Activated T-helper 1 cell treated with anti-CD3 and anti-CD28 coated beads, Interleukin-12 subunit alpha, Interleukin-12 subunit beta, Interleukin-2, Interleukin-4 antibody, amounts not matched to agents 30 ng/mL and 10 ng/mL and 1 ng/mL, durations not matched to agents 14 hours and 24 hours and 36 hours (primary cell): ENCODE measurements at regions of chrX and their contacts with region 1.

Region 1: DNA sequence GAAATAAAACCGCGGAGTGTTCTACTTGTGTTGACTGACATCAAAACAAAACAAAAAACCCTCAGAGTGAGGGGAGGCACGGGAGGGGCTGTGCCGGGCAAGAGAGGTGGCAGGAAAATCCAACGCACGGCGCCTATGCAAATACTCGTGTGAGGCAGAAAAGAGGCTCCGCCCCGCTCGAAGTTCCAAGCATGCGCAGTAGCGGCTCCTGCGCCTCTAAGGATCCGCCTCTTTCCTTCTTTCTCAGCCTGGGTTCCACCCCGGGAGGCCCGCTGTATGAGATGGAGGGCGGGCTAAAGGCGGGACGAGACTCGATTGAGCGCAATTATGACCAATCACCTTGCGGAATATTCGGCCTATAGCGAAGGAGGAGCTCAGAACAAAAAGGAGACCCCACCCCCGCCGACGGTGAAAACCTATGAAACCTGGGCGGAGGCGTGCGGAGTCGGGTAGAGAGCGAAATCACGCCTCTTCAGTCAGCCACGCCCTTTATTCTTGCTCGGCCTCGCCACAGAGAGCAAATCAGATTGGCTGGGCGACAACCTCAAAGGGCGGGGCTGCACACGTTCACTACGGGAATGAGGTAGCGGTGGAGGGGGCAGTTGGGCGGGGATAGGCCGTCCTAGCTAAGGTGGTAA is 720 bp upstream of the CDK16 start:
- DNase-seq: peak; percentile 92
- H3K4me3 Mint-ChIP-seq: peak overlapping the region; percentile 90
- H3K27ac Mint-ChIP-seq: peak overlapping the region; percentile 97
- H3K4me1 Mint-ChIP-seq: peaks cover 41% of the 10 kb centered on the region
- H3K27me3 Mint-ChIP-seq: no peaks in the 10 kb centered on the region

Region 2: GRCh38 chrX:46836701-46837557 is 380.8 kb before region 1 on chrX and contains the start of gene RP2:
- intact Hi-C with region 1: loop called (anchors 5 kb)
- DNase-seq: peak; percentile 79
- H3K4me3 Mint-ChIP-seq: peak within 1 kb of the TSS; percentile 96
- H3K27ac Mint-ChIP-seq: peak within 1 kb of the TSS; percentile 89
- H3K4me1 Mint-ChIP-seq: no peaks in the 10 kb centered on the region
- H3K27me3 Mint-ChIP-seq: peaks cover 4% of the 10 kb centered on the region
- total RNA-seq, gene RP2: 7.1 and 7.5 TPM in 2 replicates

Region 3: DNA sequence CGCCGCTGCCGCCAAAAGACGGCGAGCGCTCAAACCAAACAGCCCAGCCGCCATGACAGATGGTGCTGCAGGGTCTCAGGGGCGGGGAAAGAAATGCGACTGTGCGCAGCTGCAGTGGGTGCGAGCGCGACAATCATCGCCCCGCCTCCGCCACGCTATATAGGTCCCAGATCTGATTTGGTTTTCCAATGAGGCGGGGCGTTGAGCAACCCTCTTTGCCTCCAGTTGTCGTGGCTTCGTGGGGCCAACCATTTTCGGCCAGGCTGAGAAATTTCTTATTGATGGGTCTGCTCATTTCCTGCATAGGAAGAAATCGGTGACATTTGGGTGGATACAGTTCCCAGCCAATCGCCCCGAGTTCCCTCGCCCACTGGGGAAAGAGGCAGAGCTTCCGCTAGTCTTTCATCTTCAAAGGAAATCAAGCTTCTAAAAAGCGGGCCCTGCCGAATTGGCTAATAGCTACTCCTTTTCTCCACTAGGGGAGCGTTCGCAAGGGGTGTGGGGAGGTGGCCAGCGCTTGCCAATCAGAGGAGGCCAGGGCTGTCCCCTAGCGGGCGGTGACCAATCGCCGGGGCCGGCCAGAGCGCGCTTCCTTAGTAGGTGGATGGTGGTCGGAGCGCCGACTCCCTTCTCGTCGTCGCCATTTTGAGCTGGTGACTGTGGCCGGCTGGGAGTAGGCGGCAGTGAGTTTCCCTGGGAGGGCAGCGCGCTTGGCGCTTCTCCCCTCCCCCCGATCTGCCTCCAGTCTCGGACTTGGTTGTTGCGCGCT is 73.0 kb before region 1 on chrX and contains the starts of genes NDUFB11 and RBM10:
- intact Hi-C with region 1: loop called (anchors 1 kb)
- DNase-seq: peak; percentile 89
- H3K4me3 Mint-ChIP-seq: peak within 1 kb of the TSS; percentile 100
- H3K27ac Mint-ChIP-seq: peak within 1 kb of the TSS; percentile 100
- H3K4me1 Mint-ChIP-seq: peaks cover 18% of the 10 kb centered on the region
- H3K27me3 Mint-ChIP-seq: peaks cover 2% of the 10 kb centered on the region
- total RNA-seq, gene NDUFB11: 84.5 and 88.7 TPM in 2 replicates
- total RNA-seq, gene RBM10: 62.0 and 64.1 TPM in 2 replicates

Region 4: GRCh38 chrX:47200385-47201150 is 17.2 kb before region 1 on chrX:
- intact Hi-C with region 1: no loop called
- DNase-seq: no peak
- H3K4me3 Mint-ChIP-seq: no peak overlapping the region
- H3K27ac Mint-ChIP-seq: peak overlapping the region; percentile 48
- H3K4me1 Mint-ChIP-seq: peaks cover 23% of the 10 kb centered on the region
- H3K27me3 Mint-ChIP-seq: no peaks in the 10 kb centered on the region

Region 5: GRCh38 chrX:47311932-47312774 is 94.4 kb after region 1 on chrX:
- intact Hi-C with region 1: loop called (anchors 1 kb)
- DNase-seq: peak; percentile 1
- H3K4me3 Mint-ChIP-seq: no peak overlapping the region
- H3K27ac Mint-ChIP-seq: no peak overlapping the region
- H3K4me1 Mint-ChIP-seq: no peaks in the 10 kb centered on the region
- H3K27me3 Mint-ChIP-seq: no peaks in the 10 kb centered on the region

Region 6: GRCh38 chrX:48475774-48476577 is 1258.2 kb after region 1 on chrX and contains the start of gene FTSJ1:
- intact Hi-C with region 1: loop called (anchors 5 kb)
- DNase-seq: peak; percentile 86
- H3K4me3 Mint-ChIP-seq: peak within 1 kb of the TSS; percentile 98
- H3K27ac Mint-ChIP-seq: peak within 1 kb of the TSS; percentile 90
- H3K4me1 Mint-ChIP-seq: peaks cover 20% of the 10 kb centered on the region
- H3K27me3 Mint-ChIP-seq: peaks cover 2% of the 10 kb centered on the region
- total RNA-seq, gene FTSJ1: 96.2 and 103 TPM in 2 replicates